Activated T-helper 1 cell treated with anti-CD3 and anti-CD28 coated beads, Interleukin-12 subunit alpha, Interleukin-12 subunit beta, Interleukin-2, Interleukin-4 antibody, amounts not matched to agents 30 ng/mL and 10 ng/mL and 1 ng/mL, durations not matched to agents 14 hours and 24 hours and 36 hours (primary cell): ENCODE measurements at regions of chr5 and their contacts with region 1.

Region 1: DNA sequence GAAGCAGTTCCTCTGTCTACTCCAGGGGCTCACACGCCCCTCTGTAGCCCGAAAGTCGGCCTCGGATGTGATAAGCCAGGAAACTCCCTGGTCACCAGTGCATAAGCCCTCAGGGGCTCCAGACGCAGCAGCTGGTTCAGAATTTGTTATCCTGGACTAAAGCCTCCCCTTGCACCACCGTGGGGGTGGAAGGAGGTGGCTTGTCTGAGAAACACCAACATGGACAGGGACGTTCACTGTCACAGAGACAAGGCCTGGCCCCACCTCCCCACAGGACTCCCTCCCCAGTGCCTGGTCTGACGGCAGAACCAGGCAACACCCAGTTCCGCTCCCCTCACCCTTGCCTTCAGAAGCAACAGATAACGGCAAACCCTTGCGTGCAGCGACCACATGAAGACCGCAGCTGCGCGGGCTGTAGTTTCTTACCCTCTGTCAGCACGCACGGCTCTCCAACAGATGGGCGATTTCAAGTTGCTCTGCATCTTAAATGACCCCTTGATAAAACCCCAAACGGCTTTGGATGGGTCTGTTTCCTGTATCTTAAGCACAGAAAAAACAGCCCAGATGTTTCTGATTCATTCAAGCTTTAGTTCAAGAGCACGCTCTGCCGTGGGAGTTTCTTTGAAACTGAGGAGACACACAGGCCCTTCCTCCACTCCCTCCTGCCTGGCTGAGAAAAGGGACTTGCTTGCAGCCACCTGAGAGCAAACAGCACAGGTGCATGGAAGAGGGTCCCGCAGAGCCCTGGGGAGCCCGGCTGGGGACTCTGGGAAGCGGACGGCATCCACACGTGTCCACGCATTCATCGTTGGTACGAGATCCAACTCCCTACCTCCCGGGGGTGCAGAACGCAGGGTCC is 44.7 kb upstream of the NKD2 start:
- DNase-seq: peak; percentile 62
- H3K4me3 Mint-ChIP-seq: peak overlapping the region; percentile 82
- H3K27ac Mint-ChIP-seq: peak overlapping the region; percentile 90
- H3K4me1 Mint-ChIP-seq: peaks cover 38% of the 10 kb centered on the region
- H3K27me3 Mint-ChIP-seq: peaks cover 8% of the 10 kb centered on the region

Region 2: GRCh38 chr5:1111727-1112289 is 147.9 kb after region 1 on chr5 and contains the start of gene SLC12A7:
- intact Hi-C with region 1: loop called (anchors 5 kb)
- DNase-seq: peak; percentile 67
- H3K4me3 Mint-ChIP-seq: peak within 1 kb of the TSS; percentile 87
- H3K27ac Mint-ChIP-seq: peak within 1 kb of the TSS; percentile 79
- H3K4me1 Mint-ChIP-seq: peaks cover 30% of the 10 kb centered on the region
- H3K27me3 Mint-ChIP-seq: peaks cover 9% of the 10 kb centered on the region
- total RNA-seq, gene SLC12A7: 24.4 and 26.6 TPM in 2 replicates